WTC11 (cell line): ENCODE measurements at regions of chr3 and their contacts with region 1.

Region 1: GRCh38 chr3:98717584-98717983 is 45.6 kb upstream of the ST3GAL6 start:
- DNase-seq: no peak
- ATAC-seq: no peak
- H3K4me3 Mint-ChIP-seq: no peak overlapping the region
- H3K27ac Mint-ChIP-seq: no peak overlapping the region
- H3K4me1 Mint-ChIP-seq: peaks cover 22% of the 10 kb centered on the region
- H3K27me3 Mint-ChIP-seq: peaks cover 26% of the 10 kb centered on the region
- CTCF ChIP-seq: no peak

Region 2: GRCh38 chr3:98522244-98523090 is 195.1 kb before region 1 on chr3 and contains the start of gene CLDND1:
- CTCF ChIA-PET with region 1: no interaction called
- POLR2A ChIA-PET with region 1: interaction called, 11 read pairs
- DNase-seq: peak; percentile 97
- ATAC-seq: peak; percentile 98
- H3K4me3 Mint-ChIP-seq: peak within 1 kb of the TSS; percentile 90
- H3K27ac Mint-ChIP-seq: peak within 1 kb of the TSS; percentile 98
- H3K4me1 Mint-ChIP-seq: peaks cover 38% of the 10 kb centered on the region
- H3K27me3 Mint-ChIP-seq: no peaks in the 10 kb centered on the region
- CTCF ChIP-seq: no peak
- total RNA-seq, gene CLDND1: 74.8 to 80.6 TPM (median 78.5 TPM) in 3 replicates

Region 3: DNA sequence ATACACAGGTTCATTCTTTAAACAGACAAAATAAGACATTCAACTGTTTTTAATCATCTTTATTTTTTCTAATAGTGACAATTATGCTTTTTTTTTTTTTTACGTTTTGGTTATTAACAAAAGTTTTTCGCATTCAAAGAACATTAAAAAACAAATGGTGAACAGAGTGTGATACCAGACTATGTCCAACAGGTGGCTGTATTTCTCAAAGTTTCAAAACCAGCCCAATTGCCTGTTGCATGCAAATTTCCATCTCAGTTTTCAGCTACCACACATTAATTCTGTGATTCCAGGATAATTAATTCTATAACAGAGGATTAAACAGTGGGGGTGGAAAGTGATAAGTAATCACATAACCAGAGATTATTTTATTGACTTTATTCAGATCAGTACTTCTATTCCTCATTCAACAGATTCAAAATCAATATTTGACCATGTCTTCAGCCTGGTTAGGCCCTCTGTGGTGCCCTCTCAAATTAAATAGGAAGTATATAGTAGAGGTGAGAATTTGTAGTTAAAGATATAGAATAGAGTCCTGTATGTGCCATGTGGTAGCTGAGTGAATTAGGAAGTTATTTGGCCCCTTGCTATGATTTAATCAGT is 306.1 kb after region 1 on chr3:
- CTCF ChIA-PET with region 1: no interaction called
- POLR2A ChIA-PET with region 1: no interaction called
- DNase-seq: no peak
- ATAC-seq: no peak; the same call in 1 of the 2 replicates
- H3K4me3 Mint-ChIP-seq: no peak overlapping the region
- H3K27ac Mint-ChIP-seq: no peak overlapping the region
- H3K4me1 Mint-ChIP-seq: no peaks in the 10 kb centered on the region
- H3K27me3 Mint-ChIP-seq: no peaks in the 10 kb centered on the region; the same call in 1 of the 2 replicates
- CTCF ChIP-seq: peak; percentile 31